ENCODE measurements at regions of chr3 and their contacts with region 1.

Region 1: DNA sequence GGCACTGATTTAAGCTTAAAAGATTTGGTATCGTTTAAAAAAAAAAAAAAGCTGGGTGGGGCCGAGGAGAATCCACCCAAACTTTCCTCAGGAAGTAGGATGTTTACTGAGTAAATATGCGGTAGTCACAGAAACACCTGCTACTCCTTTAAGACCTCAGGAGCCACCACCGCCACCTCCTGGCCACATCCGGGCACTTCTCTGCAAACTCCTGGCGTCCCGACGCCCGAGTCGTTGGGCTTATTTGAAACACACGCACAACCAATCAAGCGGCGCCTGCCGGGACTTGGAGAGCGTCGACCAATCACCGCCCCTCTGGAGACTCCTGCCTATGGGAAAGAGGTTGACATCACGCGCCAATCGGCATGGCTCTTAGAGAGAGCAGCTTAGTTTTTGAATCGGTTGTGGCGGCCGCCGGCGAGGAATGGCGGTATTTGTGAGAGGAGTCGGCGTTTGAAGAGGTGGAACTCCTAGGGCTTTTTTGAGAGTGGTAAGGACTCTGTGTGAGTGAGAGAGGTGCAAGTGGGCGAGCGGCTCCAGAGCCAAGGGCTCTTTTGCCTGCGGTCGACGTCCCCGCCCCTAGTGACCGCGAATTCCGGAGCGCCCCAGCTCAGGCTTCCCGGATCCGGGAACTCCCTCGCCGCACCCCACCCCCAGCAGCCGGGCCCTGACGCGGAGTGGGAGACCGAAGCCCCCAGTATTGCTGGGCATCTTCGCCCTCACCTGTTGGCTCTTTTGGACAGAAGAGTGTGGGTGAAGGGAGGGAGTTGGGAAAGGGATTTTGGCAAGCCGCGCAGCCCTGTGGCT is at the start of gene ECT2:
- DNase-seq: peak; percentile 98 to 100
- H3K4me3 ChIP-seq: peak within 1 kb of the TSS; percentile 69 to 80
- H3K27ac ChIP-seq: peak within 1 kb of the TSS; percentile 57 to 83
- H3K4me1 ChIP-seq: peaks cover 0 to 13% of the 10 kb centered on the region in 2 donors
- H3K27me3 ChIP-seq: no peaks in the 10 kb centered on the region
- CTCF ChIP-seq: peak; percentile 68 to 72 (median 72)
- total RNA-seq, gene ECT2: 27.1 TPM

Region 2: GRCh38 chr3:171753665-171754408 is 996.7 kb before region 1 on chr3:
- intact Hi-C with region 1: no loop called
- DNase-seq: no peak
- H3K4me3 ChIP-seq: no peak overlapping the region
- H3K27ac ChIP-seq: peak overlapping the region in 1 of 2 donors; percentile 12
- H3K4me1 ChIP-seq: peaks cover 0 to 22% of the 10 kb centered on the region in 2 donors
- H3K27me3 ChIP-seq: no peaks in the 10 kb centered on the region
- CTCF ChIP-seq: no peak

Region 3: GRCh38 chr3:172347895-172348680 is 402.5 kb before region 1 on chr3:
- intact Hi-C with region 1: no loop called
- DNase-seq: no peak
- H3K4me3 ChIP-seq: no peak overlapping the region
- H3K27ac ChIP-seq: no peak overlapping the region
- H3K4me1 ChIP-seq: no peaks in the 10 kb centered on the region
- H3K27me3 ChIP-seq: no peaks in the 10 kb centered on the region
- CTCF ChIP-seq: no peak

Region 4: GRCh38 chr3:172622916-172623700 is 127.5 kb before region 1 on chr3:
- intact Hi-C with region 1: loop called (anchors 5 kb)
- DNase-seq: no peak
- H3K4me3 ChIP-seq: no peak overlapping the region
- H3K27ac ChIP-seq: no peak overlapping the region
- H3K4me1 ChIP-seq: no peaks in the 10 kb centered on the region
- H3K27me3 ChIP-seq: no peaks in the 10 kb centered on the region
- CTCF ChIP-seq: peak; percentile 11 to 64 (median 42)

Region 5: DNA sequence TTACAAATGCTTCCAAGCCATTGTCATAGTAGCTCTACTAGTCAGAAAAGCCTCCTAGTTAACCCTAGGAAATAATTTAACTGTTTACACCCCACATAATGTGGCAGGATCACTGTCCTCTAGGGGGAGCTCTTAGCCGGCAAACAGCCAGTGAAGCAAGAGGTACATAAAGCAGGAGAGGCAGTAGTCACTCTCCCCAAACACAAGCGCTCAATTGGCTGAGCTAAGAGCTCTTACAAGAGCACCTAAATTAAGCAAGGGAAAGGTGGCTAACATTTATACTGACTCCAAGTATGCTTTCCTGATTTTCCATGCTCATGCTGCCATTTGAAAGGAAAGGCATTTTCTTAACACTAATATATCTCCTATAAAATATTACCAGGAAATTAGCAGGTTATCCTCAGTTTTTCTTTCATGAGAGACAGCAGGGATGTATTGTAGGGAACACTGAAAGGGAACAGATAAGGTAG is 77.3 kb before region 1 on chr3:
- intact Hi-C with region 1: loop called (anchors 5 kb)
- DNase-seq: no peak
- H3K4me3 ChIP-seq: no peak overlapping the region
- H3K27ac ChIP-seq: no peak overlapping the region
- H3K4me1 ChIP-seq: peaks cover 0 to 11% of the 10 kb centered on the region in 2 donors
- H3K27me3 ChIP-seq: no peaks in the 10 kb centered on the region
- CTCF ChIP-seq: peak in 2 of 3 experiments; percentile 48 to 52

Measured in ascending aorta (tissue), 2 donors.